BJ (cell line): ENCODE measurements at regions of chr3 and their contacts with region 1.

Region 1: DNA sequence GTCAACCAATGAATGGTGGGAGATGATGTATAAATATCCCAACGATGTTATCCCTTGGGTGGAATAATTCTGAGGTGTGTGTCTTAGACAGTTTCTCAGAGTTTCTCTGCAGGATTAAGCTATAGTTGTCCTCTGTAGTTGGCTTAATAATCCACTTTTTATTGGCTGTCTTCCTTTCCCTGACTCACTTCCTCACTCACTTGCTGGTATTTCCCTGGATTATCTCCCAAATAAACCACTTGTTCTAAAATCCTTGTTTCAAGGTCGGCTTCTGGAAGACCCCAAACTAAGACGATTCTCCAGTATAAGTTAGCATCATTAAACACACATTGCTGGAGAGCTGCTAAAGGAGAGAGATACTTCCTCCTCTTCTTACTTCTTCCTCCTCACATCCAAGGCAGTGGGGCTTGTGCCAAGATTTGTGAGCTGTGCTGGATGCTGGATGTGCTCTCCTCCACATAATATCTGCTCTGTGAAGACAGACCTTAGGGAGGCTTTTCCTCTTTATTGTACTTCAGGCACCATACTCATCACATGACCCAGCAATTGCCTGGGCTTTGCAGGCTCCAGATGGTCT is 22.5 kb upstream of the ROPN1 start:
- DNase-seq: no peak
- H3K4me3 ChIP-seq: no peak overlapping the region
- H3K27me3 ChIP-seq: no peaks in the 10 kb centered on the region; the same call in 1 of the 2 replicates
- CTCF ChIP-seq: no peak

Region 2: GRCh38 chr3:124078953-124079911 is 64.8 kb after region 1 on chr3:
- CTCF ChIA-PET with region 1: interaction called, 108 read pairs
- POLR2A ChIA-PET with region 1: no interaction called
- DNase-seq: no peak
- H3K4me3 ChIP-seq: no peak overlapping the region
- H3K27me3 ChIP-seq: no peaks in the 10 kb centered on the region; the same call in 1 of the 2 replicates
- CTCF ChIP-seq: peak; percentile 74

Region 3: GRCh38 chr3:124281453-124282316 is 267.2 kb after region 1 on chr3:
- CTCF ChIA-PET with region 1: interaction called, 84 read pairs
- POLR2A ChIA-PET with region 1: no interaction called
- DNase-seq: no peak
- H3K4me3 ChIP-seq: no peak overlapping the region
- H3K27me3 ChIP-seq: no peaks in the 10 kb centered on the region
- CTCF ChIP-seq: peak; percentile 60